Colonic mucosa (tissue), 4 donors: ENCODE measurements at regions of chr16 and their contacts with region 1.

Region 1: DNA sequence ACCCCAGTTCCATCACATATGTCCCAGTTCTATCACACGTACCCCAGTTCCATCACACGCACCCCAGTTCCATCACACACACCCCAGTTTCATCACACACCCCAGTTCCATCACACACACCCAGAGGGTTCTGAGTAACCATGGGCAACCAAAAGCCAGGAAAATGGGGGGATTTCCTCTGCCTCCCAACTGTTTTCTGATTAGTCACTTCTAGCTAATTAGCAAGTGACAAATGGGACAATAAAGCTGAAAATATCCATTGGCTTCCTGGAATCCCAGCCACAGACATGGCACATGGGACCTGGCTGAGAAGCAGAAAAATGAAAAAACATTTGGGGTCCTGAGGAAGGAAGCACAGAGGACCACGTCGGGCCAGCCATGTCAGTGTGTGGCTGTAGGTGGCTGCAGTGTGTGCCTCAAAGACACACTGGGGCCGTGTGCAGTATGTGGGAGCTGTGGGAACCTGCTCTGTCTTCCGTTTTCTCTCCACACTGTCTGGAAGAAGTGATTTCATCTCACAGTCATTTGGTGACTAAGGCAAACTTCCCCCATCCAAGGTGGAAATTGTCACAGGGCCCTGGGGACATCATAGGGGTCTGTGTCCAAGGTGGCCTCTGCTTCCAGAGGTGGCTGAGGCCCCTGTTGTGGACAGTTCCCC is 106.7 kb downstream of the CMIP start:
- DNase-seq: no peak
- H3K4me3 ChIP-seq: no peak overlapping the region
- H3K27ac ChIP-seq: no peak overlapping the region
- H3K4me1 ChIP-seq: peaks cover 7% of the 10 kb centered on the region
- H3K27me3 ChIP-seq: no peaks in the 10 kb centered on the region
- CTCF ChIP-seq: no peak

Region 2: DNA sequence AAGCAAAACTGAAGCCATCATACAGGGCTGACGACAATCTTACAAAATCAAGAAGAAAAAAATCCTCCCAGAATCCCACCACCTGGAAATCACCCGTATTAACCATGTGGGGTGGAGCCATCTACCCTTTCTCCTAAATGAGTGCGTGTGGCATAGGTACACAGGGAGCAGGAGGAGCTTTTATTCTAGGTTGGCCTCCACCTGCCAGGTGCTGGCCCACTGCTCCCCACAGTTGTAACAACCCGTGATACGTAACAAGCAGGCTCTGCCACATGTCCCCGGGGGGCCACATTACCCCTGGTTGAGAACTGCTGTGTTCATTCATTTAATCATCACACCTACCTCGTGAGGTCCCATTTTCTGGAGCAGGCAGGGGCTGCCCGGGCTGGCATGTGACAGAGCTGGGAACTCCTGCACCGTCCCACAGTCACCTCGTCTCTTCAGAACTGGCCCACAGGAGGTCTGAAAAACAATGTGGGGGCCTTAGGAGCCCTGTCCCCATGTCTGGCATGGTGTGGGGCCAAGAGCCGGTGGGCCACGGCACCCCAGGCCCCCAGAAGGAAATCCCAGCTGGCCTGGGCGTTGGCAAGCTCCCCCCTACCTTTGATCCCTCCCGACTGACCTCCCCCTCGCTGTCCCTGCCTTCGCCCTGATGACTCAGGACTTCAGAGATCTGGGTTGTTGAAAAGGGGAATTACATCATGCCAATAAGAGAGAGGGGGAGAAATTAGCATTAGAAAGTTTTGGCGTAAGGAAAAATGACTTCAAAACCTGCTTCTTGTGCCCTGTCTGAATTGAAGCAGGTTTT is 93.8 kb before region 1 on chr16:
- intact Hi-C with region 1: loop called (anchors 10 kb)
- DNase-seq: no peak
- H3K4me3 ChIP-seq: no peak overlapping the region
- H3K27ac ChIP-seq: peak overlapping the region; percentile 54
- H3K4me1 ChIP-seq: peaks cover 14% of the 10 kb centered on the region
- H3K27me3 ChIP-seq: no peaks in the 10 kb centered on the region
- CTCF ChIP-seq: no peak

Region 3: DNA sequence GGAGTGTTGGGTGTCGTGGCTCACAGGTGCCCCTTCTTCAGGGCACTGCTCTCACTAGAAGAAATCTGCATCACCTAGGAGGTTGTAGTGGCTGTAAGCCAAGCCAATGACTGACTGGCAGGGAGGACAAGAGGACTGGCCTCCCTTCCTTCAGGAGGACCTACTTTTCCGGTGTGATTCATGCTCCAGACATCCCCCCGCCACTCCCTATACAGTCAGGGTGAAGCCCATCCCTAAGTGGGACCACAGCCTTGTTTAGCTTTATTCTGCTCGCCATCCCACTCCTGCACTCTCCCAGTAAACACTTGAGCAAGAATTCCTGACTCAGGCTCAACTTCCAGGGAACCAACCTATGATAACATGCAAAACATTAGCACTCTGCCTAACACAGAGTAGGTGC is 294.8 kb after region 1 on chr16:
- intact Hi-C with region 1: no loop called
- DNase-seq: no peak
- H3K4me3 ChIP-seq: no peak overlapping the region
- H3K27ac ChIP-seq: no peak overlapping the region
- H3K4me1 ChIP-seq: no peaks in the 10 kb centered on the region
- H3K27me3 ChIP-seq: no peaks in the 10 kb centered on the region
- CTCF ChIP-seq: no peak